HEK293T (cell line): ENCODE measurements at regions of chr5 and their contacts with region 1.

Region 1: GRCh38 chr5:98905857-98906690 is 22.7 kb downstream of the CHD1 start:
- DNase-seq: peak; percentile 7

Region 2: DNA sequence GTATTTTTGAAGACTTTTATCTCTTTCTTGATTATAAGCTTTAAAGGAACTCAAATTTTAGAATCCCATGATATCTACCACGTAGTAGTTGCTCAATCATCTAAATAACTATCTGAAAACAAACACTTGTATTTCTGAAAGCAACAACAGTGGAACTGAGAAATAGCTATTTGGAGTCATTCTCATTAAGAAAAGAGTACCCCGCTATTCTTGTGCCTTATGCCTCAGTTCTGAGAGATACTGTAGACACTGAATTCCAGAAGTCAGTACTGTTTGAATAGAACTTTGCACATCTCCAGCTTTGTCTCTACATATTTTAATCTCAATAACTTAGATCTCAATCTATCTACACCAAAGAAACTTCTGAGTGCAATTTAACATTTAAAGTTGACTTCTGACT is 11.4 kb after region 1 on chr5:
- CTCF ChIA-PET with region 1: no interaction called
- POLR2A ChIA-PET with region 1: no interaction called
- DNase-seq: no peak

Region 3: GRCh38 chr5:99032234-99033013 is 126.3 kb after region 1 on chr5:
- CTCF ChIA-PET with region 1: interaction called, 13 read pairs
- POLR2A ChIA-PET with region 1: no interaction called
- DNase-seq: peak; percentile 60